Naive thymus-derived CD4-positive, alpha-beta T cell (primary cell): ENCODE measurements at regions of chr2 and their contacts with region 1.

Region 1: DNA sequence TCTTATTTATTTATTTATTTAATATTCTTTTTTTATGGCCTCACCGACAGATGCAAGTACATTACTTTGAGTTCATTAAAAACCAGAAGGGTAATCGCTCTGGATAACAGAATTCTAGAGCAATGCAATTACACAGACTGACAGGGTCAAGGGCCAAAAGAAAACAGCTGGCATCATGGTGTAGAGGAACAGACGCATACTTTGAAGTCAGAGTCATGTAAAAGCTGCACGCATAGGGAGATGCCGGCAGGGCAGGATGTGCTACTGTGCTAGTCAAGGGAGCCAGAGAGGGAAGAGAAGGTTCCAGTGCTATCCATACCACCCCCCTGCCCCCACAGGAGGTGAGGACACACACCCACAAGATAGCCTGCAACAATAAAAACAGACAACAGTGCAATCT is 115.2 kb upstream of the TFCP2L1 start:
- DNase-seq: no peak
- ATAC-seq: no peak
- H3K4me3 ChIP-seq: no peak overlapping the region
- H3K4me3 Mint-ChIP-seq: no peak overlapping the region
- H3K27ac ChIP-seq: no peak overlapping the region
- H3K27ac Mint-ChIP-seq: peak overlapping the region in 2 of 9 donors; percentile 38 to 67
- H3K4me1 ChIP-seq: no peaks in the 10 kb centered on the region
- H3K4me1 Mint-ChIP-seq: peaks cover 0 to 3% (median 0%) of the 10 kb centered on the region in 7 donors
- H3K27me3 ChIP-seq: no peaks in the 10 kb centered on the region
- H3K27me3 Mint-ChIP-seq: no peaks in the 10 kb centered on the region

Region 2: GRCh38 chr2:119449521-119449920 is 1950.7 kb before region 1 on chr2:
- CTCF ChIA-PET with region 1: no interaction called
- POLR2A ChIA-PET with region 1: no interaction called
- intact Hi-C with region 1: no loop called
- DNase-seq: no peak
- ATAC-seq: no peak
- H3K4me3 ChIP-seq: no peak overlapping the region
- H3K4me3 Mint-ChIP-seq: no peak overlapping the region
- H3K27ac ChIP-seq: no peak overlapping the region
- H3K27ac Mint-ChIP-seq: no peak overlapping the region
- H3K4me1 ChIP-seq: no peaks in the 10 kb centered on the region
- H3K4me1 Mint-ChIP-seq: peaks cover 0 to 16% (median 6%) of the 10 kb centered on the region in 7 donors
- H3K27me3 ChIP-seq: no peaks in the 10 kb centered on the region
- H3K27me3 Mint-ChIP-seq: peaks cover 14 to 70% (median 40%) of the 10 kb centered on the region in 5 donors

Region 3: DNA sequence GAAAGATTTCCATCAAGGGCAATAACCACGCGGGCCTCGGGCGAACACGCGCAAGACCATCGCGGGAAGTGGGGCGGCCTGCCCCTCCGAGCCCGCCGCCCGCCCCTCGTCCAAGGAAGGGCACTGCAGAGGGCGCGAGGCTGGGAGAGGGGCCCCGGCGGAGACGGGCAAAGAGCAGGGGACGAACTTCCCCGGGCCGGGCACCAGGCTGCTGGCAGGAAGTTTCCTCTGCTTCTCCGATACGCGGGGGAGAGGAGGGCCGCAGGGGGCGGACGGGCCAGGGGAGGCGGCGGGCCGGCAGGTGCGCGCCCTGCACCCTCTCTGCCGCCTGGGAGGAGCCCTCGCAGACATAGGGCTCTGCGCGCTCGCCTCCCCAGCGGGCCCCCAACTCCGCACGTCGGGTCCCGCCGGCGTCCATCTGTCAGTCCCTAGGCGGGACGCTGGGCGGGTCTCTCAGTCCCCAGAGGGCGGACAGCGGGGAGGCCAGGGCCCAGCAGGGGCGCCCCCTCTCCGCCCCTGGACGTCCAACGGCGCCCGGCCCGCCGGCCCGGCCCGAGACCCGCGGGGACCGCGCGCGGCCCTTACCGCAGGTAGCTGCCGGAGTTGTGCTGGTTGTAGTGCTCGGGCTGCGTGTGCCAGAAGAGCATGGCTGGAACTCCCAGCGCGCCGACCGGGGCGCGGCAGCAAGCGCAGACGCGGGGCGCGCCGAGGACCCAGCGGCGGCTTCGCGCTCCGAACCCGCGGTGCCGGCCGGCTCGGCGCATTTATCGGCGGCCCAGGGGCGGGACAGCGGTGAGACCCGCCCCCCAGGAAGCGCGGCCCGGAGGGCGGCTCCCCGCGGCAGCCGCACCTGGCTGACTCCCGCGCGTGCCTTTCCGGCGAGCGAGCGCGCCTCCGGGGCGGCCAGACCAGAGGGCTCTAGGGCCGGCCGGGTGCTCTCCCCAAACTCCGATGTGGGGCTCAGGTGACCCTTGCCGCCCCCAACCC is 115.4 kb before region 1 on chr2 and contains the start of gene TFCP2L1:
- CTCF ChIA-PET with region 1: no interaction called
- POLR2A ChIA-PET with region 1: no interaction called
- intact Hi-C with region 1: no loop called
- DNase-seq: peak in 1 of 9 donors; percentile 35
- ATAC-seq: peak; percentile 40
- H3K4me3 ChIP-seq: no peak within 1 kb of the TSS
- H3K4me3 Mint-ChIP-seq: peak within 1 kb of the TSS; percentile 49 to 87 (median 68)
- H3K27ac ChIP-seq: no peak within 1 kb of the TSS
- H3K27ac Mint-ChIP-seq: no peak within 1 kb of the TSS
- H3K4me1 ChIP-seq: no peaks in the 10 kb centered on the region
- H3K4me1 Mint-ChIP-seq: peaks cover 0 to 19% (median 10%) of the 10 kb centered on the region in 7 donors
- H3K27me3 ChIP-seq: no peaks in the 10 kb centered on the region
- H3K27me3 Mint-ChIP-seq: peaks cover 41 to 58% (median 46%) of the 10 kb centered on the region in 5 donors
- total RNA-seq, gene TFCP2L1: 0.19 to 0.24 TPM in 2 of 5 experiments, not detected in the others

Region 4: GRCh38 chr2:121722479-121722878 is 322.3 kb after region 1 on chr2:
- CTCF ChIA-PET with region 1: interaction called, 14 read pairs
- POLR2A ChIA-PET with region 1: no interaction called
- intact Hi-C with region 1: loop called in 1 of 2 experiments (anchors 1 kb)
- DNase-seq: no peak
- ATAC-seq: no peak
- H3K4me3 ChIP-seq: no peak overlapping the region
- H3K4me3 Mint-ChIP-seq: no peak overlapping the region
- H3K27ac ChIP-seq: no peak overlapping the region
- H3K27ac Mint-ChIP-seq: no peak overlapping the region
- H3K4me1 ChIP-seq: peaks cover 0 to 6% of the 10 kb centered on the region in 2 donors
- H3K4me1 Mint-ChIP-seq: peaks cover 2 to 22% (median 6%) of the 10 kb centered on the region in 7 donors
- H3K27me3 ChIP-seq: no peaks in the 10 kb centered on the region
- H3K27me3 Mint-ChIP-seq: no peaks in the 10 kb centered on the region

Region 5: DNA sequence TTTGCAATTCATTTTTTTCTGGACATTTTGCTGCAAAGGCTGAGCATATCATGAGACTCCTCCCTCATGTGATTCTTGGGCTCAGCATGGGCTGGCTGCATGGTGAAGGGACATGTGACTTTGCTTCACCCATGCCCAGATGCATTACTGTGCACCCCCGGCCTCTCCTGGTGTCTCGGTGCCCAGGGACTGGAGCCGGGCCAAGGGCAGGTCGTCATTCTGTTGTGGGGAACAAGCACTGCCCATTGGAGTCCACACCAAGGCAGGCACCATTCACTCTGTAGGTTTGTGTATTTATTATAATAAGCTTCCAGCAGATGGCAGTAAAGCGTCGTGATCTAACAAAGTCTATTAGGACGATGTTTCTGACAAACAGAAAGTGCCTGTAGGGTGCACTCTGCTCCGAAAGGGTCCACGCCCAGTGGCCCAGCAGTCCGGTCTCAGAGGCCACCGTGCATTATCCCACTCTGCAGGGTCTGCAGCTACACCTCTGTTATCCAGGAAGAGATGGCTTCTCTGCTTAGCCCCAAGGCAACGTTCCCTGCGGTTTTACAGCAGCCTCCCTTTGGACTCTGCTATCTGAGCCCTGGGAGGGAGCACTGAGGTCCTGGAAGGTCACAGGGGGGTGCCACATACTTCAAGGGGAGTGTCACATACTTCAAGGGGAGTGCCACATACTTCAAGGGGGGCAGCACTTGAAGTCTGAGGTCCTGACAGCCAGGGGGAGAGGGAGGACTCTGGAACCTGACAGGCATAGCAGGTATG is 574.9 kb after region 1 on chr2:
- CTCF ChIA-PET with region 1: no interaction called
- POLR2A ChIA-PET with region 1: no interaction called
- intact Hi-C with region 1: no loop called
- DNase-seq: peak; percentile 12 to 70 (median 59)
- ATAC-seq: peak; percentile 90
- H3K4me3 ChIP-seq: peak overlapping the region; percentile 68
- H3K4me3 Mint-ChIP-seq: peak overlapping the region; percentile 71 to 87 (median 82)
- H3K27ac ChIP-seq: no peak overlapping the region
- H3K27ac Mint-ChIP-seq: peak overlapping the region in 3 of 9 donors; percentile 21 to 66 (median 25)
- H3K4me1 ChIP-seq: peaks cover 0 to 4% of the 10 kb centered on the region in 2 donors
- H3K4me1 Mint-ChIP-seq: peaks cover 6 to 11% (median 8%) of the 10 kb centered on the region in 7 donors
- H3K27me3 ChIP-seq: no peaks in the 10 kb centered on the region
- H3K27me3 Mint-ChIP-seq: peaks cover 0 to 20% (median 8%) of the 10 kb centered on the region in 5 donors